Activated CD4-positive, alpha-beta T cell treated with anti-CD3 and anti-CD28 coated beads for 36 hours (primary cell): ENCODE measurements at regions of chr10 and their contacts with region 1.

Region 1: DNA sequence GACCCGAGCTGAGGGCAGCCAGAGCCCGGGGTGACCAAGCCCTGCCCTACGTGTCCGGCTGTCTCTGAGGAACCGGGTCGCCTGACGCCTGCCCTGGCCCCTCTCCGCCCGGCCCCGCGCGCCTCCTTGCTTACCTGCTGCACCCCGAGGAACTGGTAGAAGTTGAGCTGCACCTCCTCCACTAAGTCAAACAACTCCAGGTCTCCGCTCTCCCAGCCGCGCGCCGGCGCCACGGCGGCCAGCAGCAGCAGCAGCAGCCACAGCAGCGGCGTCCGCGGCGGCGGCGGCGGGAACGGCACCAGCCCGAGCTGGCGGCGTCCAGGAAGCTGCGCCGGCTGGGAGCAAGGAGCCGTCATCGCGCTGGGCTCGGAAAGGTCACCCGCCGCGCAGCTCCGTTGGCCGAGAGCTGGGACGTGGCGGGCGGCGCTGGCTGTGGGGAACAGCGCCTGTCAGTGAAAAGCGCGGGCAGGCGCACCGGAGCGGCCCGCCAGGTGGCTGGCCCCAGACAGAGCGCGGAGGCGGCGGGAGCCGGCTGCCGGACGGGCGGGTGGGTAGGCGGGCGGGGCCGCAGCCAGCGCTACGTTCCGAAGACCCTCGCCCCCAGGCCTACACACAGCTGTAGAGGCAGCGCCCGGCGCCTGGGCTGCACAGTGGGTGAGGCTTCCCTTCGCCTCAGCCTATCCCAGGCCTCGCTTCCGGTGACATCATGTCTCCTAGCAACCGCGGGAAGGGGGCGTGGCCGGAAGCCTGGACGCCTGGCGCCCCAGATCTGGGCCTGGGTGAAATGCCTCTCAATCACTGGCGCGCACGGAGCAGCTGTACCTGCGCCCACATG is at the start of gene DNAJC1:
- DNase-seq: peak; percentile 99
- ATAC-seq: peak; percentile 93
- H3K4me3 Mint-ChIP-seq: peak within 1 kb of the TSS; percentile 94
- H3K27ac Mint-ChIP-seq: peak within 1 kb of the TSS; percentile 95
- H3K4me1 Mint-ChIP-seq: peaks cover 29% of the 10 kb centered on the region
- H3K27me3 Mint-ChIP-seq: no peaks in the 10 kb centered on the region
- total RNA-seq, gene DNAJC1: 20.6 to 28.1 TPM

Region 2: GRCh38 chr10:21495752-21496342 is 507.4 kb before region 1 on chr10:
- CTCF ChIA-PET with region 1: no interaction called
- POLR2A ChIA-PET with region 1: no interaction called
- intact Hi-C with region 1: loop called in 1 of 2 experiments (anchors 2 kb)
- DNase-seq: peak; percentile 92
- ATAC-seq: peak; percentile 86
- H3K4me3 Mint-ChIP-seq: peak overlapping the region; percentile 76
- H3K27ac Mint-ChIP-seq: no peak overlapping the region
- H3K4me1 Mint-ChIP-seq: peaks cover 17% of the 10 kb centered on the region
- H3K27me3 Mint-ChIP-seq: peaks cover 47% of the 10 kb centered on the region

Region 3: DNA sequence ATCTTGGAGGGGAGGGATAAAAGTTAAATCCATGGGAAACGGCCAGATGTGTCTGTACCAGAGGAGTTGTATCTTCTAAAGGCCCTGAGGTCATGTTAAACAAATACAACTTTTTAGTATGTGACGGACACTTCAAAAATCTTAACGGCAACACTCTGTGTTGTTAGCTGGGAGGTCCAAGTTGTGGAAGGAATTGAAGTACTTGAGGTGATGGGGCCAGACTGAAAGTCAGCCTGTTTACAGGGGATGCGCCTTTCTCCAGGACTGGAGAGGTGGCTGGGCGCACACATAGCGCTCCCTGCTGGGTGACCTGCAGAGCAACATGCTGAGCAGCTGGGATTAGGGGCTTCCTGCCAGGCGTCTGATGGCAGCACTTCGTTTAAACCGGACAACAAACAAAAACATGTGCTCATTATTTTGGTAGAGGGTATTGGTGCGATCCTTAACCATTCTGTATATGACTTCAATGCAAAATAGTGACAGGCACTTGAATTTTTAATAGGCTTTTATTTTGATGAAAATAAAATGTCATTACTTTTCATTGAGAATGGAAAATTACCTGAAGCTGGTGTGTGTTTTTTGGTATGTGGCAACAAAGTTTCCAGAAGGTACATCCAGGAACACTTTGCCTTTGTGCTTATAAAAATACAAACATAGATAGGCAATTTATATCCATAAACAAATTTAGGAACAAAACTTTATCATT is 271.1 kb before region 1 on chr10:
- CTCF ChIA-PET with region 1: no interaction called
- POLR2A ChIA-PET with region 1: no interaction called
- intact Hi-C with region 1: no loop called
- DNase-seq: peak; percentile 74
- ATAC-seq: peak; percentile 88
- H3K4me3 Mint-ChIP-seq: no peak overlapping the region
- H3K27ac Mint-ChIP-seq: no peak overlapping the region
- H3K4me1 Mint-ChIP-seq: peaks cover 26% of the 10 kb centered on the region
- H3K27me3 Mint-ChIP-seq: no peaks in the 10 kb centered on the region

Region 4: GRCh38 chr10:22067099-22067498 is 63.8 kb after region 1 on chr10:
- CTCF ChIA-PET with region 1: no interaction called
- POLR2A ChIA-PET with region 1: no interaction called
- intact Hi-C with region 1: no loop called
- DNase-seq: no peak
- ATAC-seq: no peak
- H3K4me3 Mint-ChIP-seq: no peak overlapping the region
- H3K27ac Mint-ChIP-seq: no peak overlapping the region
- H3K4me1 Mint-ChIP-seq: no peaks in the 10 kb centered on the region
- H3K27me3 Mint-ChIP-seq: peaks cover 2% of the 10 kb centered on the region

Region 5: DNA sequence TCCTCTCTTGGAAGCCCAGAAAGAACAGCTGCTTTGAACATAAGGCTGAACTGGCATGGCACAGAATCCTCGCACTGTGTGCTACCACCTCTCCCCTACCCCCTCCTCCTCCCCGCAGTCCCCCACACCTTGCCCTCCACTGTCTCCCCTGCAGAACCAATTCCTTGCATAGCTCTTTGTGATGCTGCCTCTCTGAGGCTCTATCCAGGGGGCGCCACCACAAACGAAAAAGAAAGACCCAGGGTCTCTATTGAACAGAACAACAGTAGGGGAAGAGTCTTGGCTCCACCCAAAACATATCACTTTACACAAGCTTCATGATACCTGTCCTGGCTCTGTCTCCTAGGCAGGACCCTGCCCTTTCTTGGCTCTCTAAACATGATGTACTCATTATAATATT is 240.7 kb after region 1 on chr10:
- CTCF ChIA-PET with region 1: interaction called, 3 read pairs
- POLR2A ChIA-PET with region 1: no interaction called
- intact Hi-C with region 1: loop called (anchors 1 to 2 kb)
- DNase-seq: peak; percentile 27
- ATAC-seq: no peak
- H3K4me3 Mint-ChIP-seq: no peak overlapping the region
- H3K27ac Mint-ChIP-seq: no peak overlapping the region
- H3K4me1 Mint-ChIP-seq: peaks cover 43% of the 10 kb centered on the region
- H3K27me3 Mint-ChIP-seq: peaks cover 3% of the 10 kb centered on the region

Region 6: GRCh38 chr10:22335173-22336123 is 332.2 kb after region 1 on chr10:
- CTCF ChIA-PET with region 1: no interaction called
- POLR2A ChIA-PET with region 1: interaction called, 3 read pairs
- intact Hi-C with region 1: loop called (anchors 1 to 5 kb)
- DNase-seq: peak; percentile 82
- ATAC-seq: peak; percentile 67
- H3K4me3 Mint-ChIP-seq: peak overlapping the region; percentile 67
- H3K27ac Mint-ChIP-seq: peak overlapping the region; percentile 85
- H3K4me1 Mint-ChIP-seq: peaks cover 40% of the 10 kb centered on the region
- H3K27me3 Mint-ChIP-seq: peaks cover 39% of the 10 kb centered on the region

Region 7: GRCh38 chr10:22682237-22683139 is 679.2 kb after region 1 on chr10:
- CTCF ChIA-PET with region 1: no interaction called
- POLR2A ChIA-PET with region 1: no interaction called
- intact Hi-C with region 1: loop called in 1 of 2 experiments (anchors 5 kb)
- DNase-seq: peak; percentile 78
- ATAC-seq: peak; percentile 50
- H3K4me3 Mint-ChIP-seq: peak overlapping the region; percentile 70
- H3K27ac Mint-ChIP-seq: peak overlapping the region; percentile 97
- H3K4me1 Mint-ChIP-seq: peaks cover 88% of the 10 kb centered on the region
- H3K27me3 Mint-ChIP-seq: no peaks in the 10 kb centered on the region

Region 8: GRCh38 chr10:23067939-23068775 is 1064.9 kb after region 1 on chr10:
- CTCF ChIA-PET with region 1: interaction called, 4 read pairs
- POLR2A ChIA-PET with region 1: no interaction called
- intact Hi-C with region 1: loop called in 1 of 2 experiments (anchors 5 kb)
- DNase-seq: peak; percentile 83
- ATAC-seq: peak; percentile 88
- H3K4me3 Mint-ChIP-seq: no peak overlapping the region
- H3K27ac Mint-ChIP-seq: no peak overlapping the region
- H3K4me1 Mint-ChIP-seq: peaks cover 4% of the 10 kb centered on the region
- H3K27me3 Mint-ChIP-seq: peaks cover 2% of the 10 kb centered on the region